Dorsolateral prefrontal cortex (tissue), 120 donors: ENCODE measurements at regions of chr4 and their contacts with region 1.

Region 1: GRCh38 chr4:77385124-77385969 is 220.3 kb upstream of the CXCL13 start:
- DNase-seq: peak in 9 of 10 donors; percentile 34 to 76 (median 62)
- H3K4me3 ChIP-seq: no peak overlapping the region
- H3K27ac ChIP-seq: no peak overlapping the region
- H3K27me3 ChIP-seq: no peaks in the 10 kb centered on the region
- CTCF ChIP-seq: peak; percentile 63 to 93 (median 86)

Region 2: GRCh38 chr4:77284036-77284435 is 101.3 kb before region 1 on chr4:
- intact Hi-C with region 1: no loop called
- DNase-seq: no peak
- H3K4me3 ChIP-seq: no peak overlapping the region
- H3K27ac ChIP-seq: no peak overlapping the region
- H3K27me3 ChIP-seq: peaks cover 0 to 5% (median 0%) of the 10 kb centered on the region in 45 donors
- CTCF ChIP-seq: no peak

Region 3: DNA sequence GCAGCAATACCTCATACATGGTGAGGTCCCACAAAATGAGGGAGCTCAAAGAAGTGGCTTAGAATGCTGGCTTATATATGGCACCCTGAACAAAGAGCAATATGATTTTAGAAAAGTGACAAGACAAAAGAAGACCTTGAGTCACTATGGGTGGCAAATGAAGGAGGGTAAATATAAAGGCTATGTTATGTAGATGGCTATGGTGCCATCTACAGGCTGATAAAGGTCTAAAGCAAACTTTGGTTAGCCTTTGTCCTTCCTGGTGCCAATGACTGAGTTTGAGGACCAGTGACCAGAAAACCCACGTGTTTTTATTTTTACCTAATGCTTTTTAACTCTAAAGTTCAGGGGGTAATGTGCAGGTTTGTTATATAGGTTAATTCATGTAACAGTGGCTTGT is 76.5 kb before region 1 on chr4:
- intact Hi-C with region 1: no loop called
- DNase-seq: no peak
- H3K4me3 ChIP-seq: no peak overlapping the region
- H3K27ac ChIP-seq: no peak overlapping the region
- H3K27me3 ChIP-seq: no peaks in the 10 kb centered on the region
- CTCF ChIP-seq: peak in 21 of 56 donors; percentile 9 to 62 (median 30)

Region 4: DNA sequence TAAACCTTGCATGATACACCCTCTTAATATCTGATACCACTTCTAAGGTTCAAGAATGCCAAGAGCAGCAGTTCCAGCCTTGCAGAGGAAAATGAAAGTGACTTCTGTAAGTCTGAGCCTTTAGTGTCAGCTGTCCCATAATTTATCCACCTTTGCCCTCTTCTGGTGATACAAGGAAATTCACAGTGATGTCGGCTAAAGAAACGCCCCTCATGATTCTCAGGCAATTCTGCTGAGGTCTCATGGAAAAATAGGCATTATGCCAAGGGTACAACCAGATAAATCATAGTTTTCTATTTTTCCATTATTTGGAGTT is 48.0 kb after region 1 on chr4:
- intact Hi-C with region 1: loop called (anchors 2 to 5 kb)
- DNase-seq: no peak
- H3K4me3 ChIP-seq: peak overlapping the region in 4 of 59 donors; percentile 3 to 16 (median 8)
- H3K27ac ChIP-seq: peak overlapping the region in 5 of 59 donors; percentile 3 to 47 (median 25)
- H3K27me3 ChIP-seq: no peaks in the 10 kb centered on the region
- CTCF ChIP-seq: peak; percentile 35 to 85 (median 68)

Region 5: GRCh38 chr4:77600521-77601451 is 215.4 kb after region 1 on chr4:
- intact Hi-C with region 1: loop called in 1 of 2 experiments (anchors 5 kb)
- DNase-seq: peak in 1 of 10 donors; percentile 7
- H3K4me3 ChIP-seq: no peak overlapping the region
- H3K27ac ChIP-seq: no peak overlapping the region
- H3K27me3 ChIP-seq: peaks cover 0 to 7% (median 0%) of the 10 kb centered on the region in 45 donors
- CTCF ChIP-seq: peak; percentile 27 to 81 (median 68)

Region 6: DNA sequence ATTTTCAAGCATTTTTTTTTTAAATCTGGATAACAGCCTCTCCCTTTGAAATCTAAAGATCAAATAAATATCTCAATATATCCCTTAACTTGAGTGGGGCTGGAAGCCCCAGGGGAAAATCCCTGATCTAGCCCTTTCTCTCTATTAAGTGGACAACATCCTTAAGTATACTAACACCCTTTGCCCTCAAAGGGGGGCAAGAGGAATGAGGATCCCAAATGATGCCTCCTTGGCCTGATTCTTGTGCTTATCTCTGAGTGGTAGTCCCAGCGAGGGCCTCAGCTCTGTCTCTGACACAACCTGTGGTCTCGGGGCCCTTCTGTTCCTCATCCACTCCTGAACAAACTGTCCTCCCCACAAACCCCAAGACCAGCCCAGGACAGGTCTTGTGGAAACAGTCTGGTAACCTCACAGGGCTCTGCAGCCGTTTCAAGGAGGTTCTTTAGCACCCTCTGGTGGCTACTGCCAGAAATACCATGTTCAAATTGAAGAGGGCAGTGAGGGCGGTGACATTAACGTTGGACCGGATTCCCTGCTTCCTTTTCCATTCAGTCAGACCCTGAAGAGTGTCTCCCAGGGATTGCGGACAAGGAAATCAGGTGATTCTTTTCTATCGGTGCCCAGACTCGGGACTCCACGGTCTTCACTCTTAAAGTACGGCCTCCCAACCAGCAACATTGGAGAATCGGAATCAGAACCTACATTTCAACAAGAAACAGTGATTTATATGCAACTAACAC is 233.2 kb after region 1 on chr4:
- intact Hi-C with region 1: loop called (anchors 2 to 5 kb)
- DNase-seq: peak in 8 of 10 donors; percentile 49 to 72 (median 62)
- H3K4me3 ChIP-seq: peak overlapping the region in 45 of 59 donors; percentile 3 to 61 (median 37)
- H3K27ac ChIP-seq: peak overlapping the region in 8 of 59 donors; percentile 5 to 54 (median 24)
- H3K27me3 ChIP-seq: peaks cover 0 to 5% (median 0%) of the 10 kb centered on the region in 45 donors
- CTCF ChIP-seq: peak; percentile 58 to 88 (median 80)

Region 7: DNA sequence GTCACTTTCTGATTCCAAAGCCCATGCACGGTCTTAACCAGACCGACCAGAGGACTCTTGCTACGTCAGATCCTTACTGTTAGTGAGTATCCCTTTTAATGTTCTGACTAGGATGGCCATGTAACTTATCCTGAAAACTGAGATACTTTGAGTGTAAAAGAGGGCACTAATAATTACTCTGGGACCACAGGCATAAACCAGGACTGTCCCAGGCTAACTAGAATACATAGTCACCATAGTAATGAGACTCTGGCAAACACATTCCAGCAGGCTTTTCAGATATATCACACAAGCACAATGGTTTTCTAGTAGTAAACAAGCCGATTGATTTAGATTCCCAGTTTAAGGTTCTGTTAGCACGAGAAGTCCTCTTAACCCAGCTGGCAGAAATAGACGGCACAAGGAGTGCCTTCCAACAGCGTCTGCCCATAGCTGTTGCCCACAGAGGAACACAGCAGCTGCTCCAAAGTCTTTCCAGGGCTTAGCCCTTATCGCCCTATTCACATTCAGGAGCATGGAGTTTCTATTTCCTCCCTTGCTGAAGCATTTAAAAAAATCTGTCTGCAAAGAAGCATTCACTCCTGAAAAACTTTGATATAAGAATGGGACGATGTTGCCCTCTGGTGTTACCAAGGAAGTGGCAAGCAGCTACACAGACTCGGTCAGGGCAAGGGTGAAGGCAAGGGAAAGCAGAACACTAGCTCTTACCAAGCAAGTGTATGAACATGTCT is 312.7 kb after region 1 on chr4:
- intact Hi-C with region 1: loop called in 1 of 2 experiments (anchors 2 kb)
- DNase-seq: peak in 1 of 10 donors; percentile 18
- H3K4me3 ChIP-seq: peak overlapping the region in 8 of 59 donors; percentile 14 to 36 (median 17)
- H3K27ac ChIP-seq: no peak overlapping the region
- H3K27me3 ChIP-seq: no peaks in the 10 kb centered on the region
- CTCF ChIP-seq: peak in 54 of 56 donors; percentile 27 to 72 (median 51)